Astrocyte of the cerebellum (primary cell): ENCODE measurements at regions of chr14 and their contacts with region 1.

Region 1: DNA sequence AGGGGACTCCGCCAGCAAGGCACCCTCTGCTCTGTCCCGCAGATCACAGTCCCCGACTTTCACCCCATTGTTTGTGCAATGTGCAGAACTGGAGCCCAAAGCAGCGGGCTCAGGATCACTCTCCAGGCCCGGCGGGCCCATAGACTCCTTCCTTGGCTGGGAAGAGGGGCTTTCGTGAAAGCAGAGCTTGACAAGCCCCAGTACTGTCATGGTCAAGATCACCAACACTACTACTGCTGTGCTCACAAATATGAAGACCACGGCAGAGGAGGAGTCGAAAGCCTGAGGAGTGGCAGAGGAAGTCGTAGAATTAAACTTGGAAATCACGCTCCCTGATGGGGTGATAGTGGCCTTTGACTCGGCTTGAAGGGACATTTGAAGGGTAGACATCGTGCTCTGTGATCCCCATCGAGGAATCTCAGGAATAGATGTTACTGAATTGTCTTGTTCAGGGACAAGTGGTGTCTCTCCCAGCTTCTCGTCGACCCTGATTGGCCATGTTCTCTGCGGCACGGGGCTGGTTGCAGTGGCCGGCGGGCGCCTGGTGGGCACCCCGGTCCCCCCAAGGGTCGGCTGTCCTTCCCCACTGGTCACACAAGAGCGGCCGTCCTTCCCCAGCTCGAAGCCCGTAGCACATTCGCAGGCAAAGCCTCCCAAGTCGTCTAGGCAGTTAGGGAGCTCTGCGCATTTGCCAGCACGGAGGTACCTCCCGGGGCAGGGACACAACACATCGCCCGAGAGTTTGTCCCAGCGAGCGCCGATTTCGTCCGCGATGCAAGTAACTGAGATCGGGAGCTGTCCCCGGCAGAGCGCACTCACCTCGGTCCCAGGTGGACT is 1.1 kb downstream of the CLEC14A start:
- DNase-seq: no peak
- H3K4me3 ChIP-seq: peak overlapping the region; percentile 39
- CTCF ChIP-seq: no peak

Region 2: GRCh38 chr14:38197001-38197783 is 57.6 kb before region 1 on chr14:
- in situ Hi-C with region 1: no loop called
- DNase-seq: no peak
- H3K4me3 ChIP-seq: no peak overlapping the region
- CTCF ChIP-seq: peak; percentile 24

Region 3: DNA sequence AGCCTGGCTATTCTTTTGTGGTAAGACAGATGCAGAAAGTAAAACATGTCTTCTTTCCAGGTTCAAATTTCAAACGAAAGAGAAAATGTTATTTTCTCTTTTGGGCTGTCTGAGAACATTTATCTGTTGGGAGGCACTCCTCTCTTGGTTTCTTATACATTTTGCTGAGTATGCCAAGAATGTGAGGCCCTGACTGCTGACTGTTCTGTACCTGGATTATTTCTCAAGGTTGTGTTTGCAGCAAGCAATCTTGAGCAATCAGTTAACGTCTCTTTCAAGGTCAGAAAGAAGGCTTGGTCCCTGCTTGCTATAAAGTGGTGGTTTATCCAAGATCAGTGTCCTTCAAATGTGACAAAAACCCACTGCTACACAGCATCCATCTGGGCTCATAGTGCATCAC is 37.2 kb before region 1 on chr14:
- in situ Hi-C with region 1: loop called (anchors 5 kb)
- DNase-seq: no peak
- H3K4me3 ChIP-seq: no peak overlapping the region
- CTCF ChIP-seq: no peak

Region 4: GRCh38 chr14:38297681-38298080 is 42.9 kb after region 1 on chr14:
- in situ Hi-C with region 1: no loop called
- DNase-seq: no peak
- H3K4me3 ChIP-seq: no peak overlapping the region
- CTCF ChIP-seq: no peak

Region 5: DNA sequence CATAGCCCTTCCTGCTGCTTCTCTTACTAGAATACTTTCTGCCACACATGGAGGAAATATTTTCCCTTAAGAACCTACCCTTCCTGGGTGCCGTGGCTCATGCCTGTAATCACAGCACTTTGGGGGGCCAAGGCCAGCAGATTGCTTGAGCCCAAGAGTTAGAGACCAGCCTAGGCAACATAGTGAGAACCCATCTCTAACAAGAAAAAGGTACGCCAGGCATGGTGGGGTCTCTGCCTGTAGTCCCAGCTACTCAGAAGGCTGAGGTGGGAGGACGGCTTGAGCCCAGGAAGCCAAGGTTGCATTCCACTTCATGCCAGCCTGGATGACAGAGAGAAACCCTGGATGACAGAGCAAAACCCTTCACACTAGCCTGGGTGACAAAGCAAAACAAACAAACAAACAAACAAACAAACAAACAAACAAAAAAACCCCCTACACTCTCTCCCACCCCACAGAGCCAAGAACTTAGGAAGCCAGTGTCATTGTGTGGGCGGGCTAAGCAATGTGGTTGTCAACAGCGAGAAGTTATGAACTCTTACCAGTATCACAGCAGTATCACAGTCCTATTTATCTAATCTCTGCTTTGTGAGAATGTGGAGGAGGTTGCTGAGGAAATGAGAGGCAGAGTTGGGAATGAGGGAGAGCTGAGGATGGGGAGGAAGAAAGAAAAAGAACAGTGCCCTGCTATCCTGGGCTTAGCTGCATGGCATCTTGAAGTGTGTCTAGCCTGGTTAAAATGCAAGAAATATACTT is 54.9 kb after region 1 on chr14:
- in situ Hi-C with region 1: loop called (anchors 5 kb)
- DNase-seq: no peak
- H3K4me3 ChIP-seq: no peak overlapping the region
- CTCF ChIP-seq: no peak

Region 6: GRCh38 chr14:38329302-38329946 is 74.6 kb after region 1 on chr14:
- in situ Hi-C with region 1: no loop called
- DNase-seq: no peak
- H3K4me3 ChIP-seq: no peak overlapping the region
- CTCF ChIP-seq: no peak